Activated CD4-positive, alpha-beta T cell treated with anti-CD3 and anti-CD28 coated beads, Interleukin-2, amount 10 ng/mL, durations not matched to agents 24 days and 14 days (primary cell): ENCODE measurements at regions of chr16 and their contacts with region 1.

Region 1: DNA sequence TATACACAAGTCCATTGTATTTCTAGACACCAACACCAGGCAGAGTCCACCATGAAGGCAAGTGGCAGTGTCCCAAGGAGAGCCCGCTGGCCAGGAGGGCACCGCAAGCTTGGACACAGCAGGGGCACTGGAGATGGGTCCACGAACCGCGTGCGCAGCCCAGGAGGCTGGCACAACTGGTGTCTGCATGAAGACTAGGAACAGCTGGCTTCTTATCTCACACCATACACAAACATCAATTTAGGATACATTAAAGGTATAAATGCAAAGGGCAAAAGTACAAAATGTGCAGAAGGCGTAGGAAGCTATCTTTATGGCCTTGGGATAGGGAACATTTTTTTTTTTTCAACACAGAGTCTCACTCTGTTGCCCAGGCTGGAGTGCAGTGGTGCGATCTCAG is 52.4 kb downstream of the ANKRD11 start:
- DNase-seq: no peak
- H3K4me3 Mint-ChIP-seq: no peak overlapping the region
- H3K27ac Mint-ChIP-seq: peak overlapping the region; percentile 8
- H3K4me1 Mint-ChIP-seq: peaks cover 84% of the 10 kb centered on the region
- H3K27me3 Mint-ChIP-seq: no peaks in the 10 kb centered on the region

Region 2: DNA sequence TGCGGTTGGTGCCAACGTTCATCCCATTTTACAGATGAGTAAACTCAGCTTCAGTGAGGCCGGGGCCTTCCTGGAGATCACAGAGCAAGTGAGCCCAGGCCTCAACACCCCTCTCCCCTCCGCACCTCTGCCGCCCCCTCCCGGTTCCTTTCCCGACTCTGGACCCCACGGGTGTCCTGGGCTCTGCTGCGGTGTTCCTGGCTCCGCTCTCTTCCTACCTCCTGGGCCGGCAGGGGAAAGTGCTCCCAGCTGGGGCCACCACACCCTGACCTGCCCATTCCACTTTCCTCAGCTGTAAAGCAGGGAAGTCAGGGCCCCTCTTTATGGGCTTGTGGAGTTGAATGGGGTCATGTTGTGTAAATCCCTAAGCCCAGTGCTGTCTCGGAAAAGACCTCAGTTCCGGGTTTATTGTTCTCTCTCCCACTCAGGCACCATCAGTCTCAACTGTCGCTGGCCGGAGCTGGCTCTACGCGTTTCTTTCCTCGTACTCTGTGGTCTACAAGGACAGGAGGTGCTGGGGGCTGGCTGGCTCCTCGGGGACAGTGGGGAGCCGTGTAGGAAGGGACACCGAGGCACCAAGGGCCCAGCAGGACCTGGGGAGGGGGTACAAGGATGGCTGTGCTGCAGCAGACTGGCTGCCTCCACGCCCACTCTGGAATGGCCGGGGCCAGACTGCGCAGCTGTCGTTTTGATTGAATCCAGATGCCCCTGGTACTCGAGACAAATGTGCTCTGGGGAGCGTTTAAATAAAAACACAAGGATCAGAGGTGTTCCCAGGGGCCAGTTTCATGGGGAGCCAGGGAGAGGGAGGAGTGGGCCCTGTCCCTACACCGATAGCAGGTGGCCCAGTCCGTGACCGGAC is 366.1 kb before region 1 on chr16:
- intact Hi-C with region 1: no loop called
- DNase-seq: no peak
- H3K4me3 Mint-ChIP-seq: no peak overlapping the region
- H3K27ac Mint-ChIP-seq: no peak overlapping the region
- H3K4me1 Mint-ChIP-seq: no peaks in the 10 kb centered on the region
- H3K27me3 Mint-ChIP-seq: no peaks in the 10 kb centered on the region

Region 3: DNA sequence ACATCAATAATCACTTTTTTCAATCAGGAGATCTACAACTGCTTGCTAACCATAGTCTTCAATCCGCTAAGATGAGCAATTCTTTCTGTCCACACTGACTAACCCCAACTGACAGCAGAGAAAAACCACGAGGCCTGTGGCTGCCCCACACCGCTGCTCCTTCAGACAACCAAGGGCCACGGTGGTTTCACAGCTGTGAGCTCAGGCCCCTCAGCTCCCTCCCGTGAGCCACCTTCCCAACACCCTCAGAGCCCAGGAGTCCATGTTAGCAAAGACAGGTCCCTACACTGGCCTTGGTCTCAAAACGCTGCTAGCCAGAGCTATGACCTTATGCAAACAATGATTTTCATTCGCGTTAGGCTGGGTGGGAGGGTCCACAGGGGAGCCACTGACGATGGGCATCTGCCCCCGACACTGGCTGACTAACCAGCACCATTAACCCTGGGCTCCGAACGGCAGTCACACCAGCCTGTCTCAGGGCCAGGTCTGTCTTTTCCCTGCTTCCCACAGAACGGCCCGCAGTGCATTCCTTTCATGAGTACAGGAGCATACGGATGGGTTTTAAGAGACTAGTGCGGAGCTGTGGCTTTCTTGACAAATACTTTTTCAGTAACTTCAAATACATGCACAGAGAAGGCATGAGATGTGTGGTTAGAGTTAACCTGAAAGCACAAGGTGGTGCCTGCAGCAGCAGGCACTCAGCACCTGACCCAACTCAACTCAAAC is 14.9 kb before region 1 on chr16:
- intact Hi-C with region 1: loop called (anchors 2 kb)
- DNase-seq: peak; percentile 81
- H3K4me3 Mint-ChIP-seq: peak overlapping the region; percentile 50
- H3K27ac Mint-ChIP-seq: peak overlapping the region; percentile 75
- H3K4me1 Mint-ChIP-seq: peaks cover 66% of the 10 kb centered on the region
- H3K27me3 Mint-ChIP-seq: no peaks in the 10 kb centered on the region

Region 4: DNA sequence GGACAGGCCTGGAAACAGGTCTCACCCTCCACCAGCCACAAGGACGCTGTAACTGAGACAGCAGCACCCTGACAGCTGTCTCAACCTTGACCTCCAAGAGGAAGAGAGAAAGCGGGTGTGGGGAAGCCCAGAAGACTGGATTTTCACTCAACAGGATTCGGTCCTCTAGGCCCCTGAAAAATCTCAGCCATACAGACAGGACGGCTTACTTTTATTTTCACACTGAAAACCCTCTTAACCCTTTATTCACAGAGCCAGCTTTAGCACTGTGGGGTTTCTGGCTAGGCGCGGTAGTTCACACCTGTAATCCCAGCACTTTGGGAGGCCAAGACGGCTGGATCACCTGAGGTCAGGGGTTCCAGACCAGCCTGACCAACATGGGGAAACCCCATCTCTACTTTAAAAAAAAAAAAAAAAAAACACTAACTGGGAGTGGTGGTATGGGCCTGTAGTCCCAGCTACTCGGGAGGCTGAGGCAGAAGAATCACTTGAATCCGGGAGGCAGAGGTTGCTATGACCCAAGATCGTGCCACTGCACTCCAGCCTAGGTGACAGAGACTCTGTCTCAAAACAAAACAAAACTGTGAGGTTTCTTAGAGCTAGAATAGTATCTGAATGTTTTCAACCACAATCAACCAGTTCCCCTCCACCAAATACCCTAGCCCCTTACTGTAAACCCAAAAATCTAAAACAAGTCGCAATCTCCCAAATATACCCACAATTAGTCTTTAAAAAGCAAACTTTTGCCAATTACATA is 47.1 kb after region 1 on chr16:
- intact Hi-C with region 1: loop called (anchors 2 kb)
- DNase-seq: peak; percentile 78
- H3K4me3 Mint-ChIP-seq: peak overlapping the region; percentile 78
- H3K27ac Mint-ChIP-seq: peak overlapping the region; percentile 90
- H3K4me1 Mint-ChIP-seq: peaks cover 71% of the 10 kb centered on the region
- H3K27me3 Mint-ChIP-seq: no peaks in the 10 kb centered on the region